HEK293 (cell line): ENCODE measurements at regions of chr17 and their contacts with region 1.

Region 1: GRCh38 chr17:44899069-44899782 is at the start of gene EFTUD2:
- H3K4me3 ChIP-seq: peak within 1 kb of the TSS; percentile 74
- H3K27ac ChIP-seq: peak within 1 kb of the TSS; percentile 93
- H3K4me1 ChIP-seq: peaks cover 24% of the 10 kb centered on the region
- CTCF ChIP-seq: no peak; the same call in 1 of the 2 replicates

Region 2: GRCh38 chr17:44832805-44833204 is 66.4 kb before region 1 on chr17:
- CTCF ChIA-PET with region 1: no interaction called
- POLR2A ChIA-PET with region 1: no interaction called
- H3K4me3 ChIP-seq: no peak overlapping the region
- H3K27ac ChIP-seq: no peak overlapping the region
- H3K4me1 ChIP-seq: peaks cover 14% of the 10 kb centered on the region
- CTCF ChIP-seq: no peak

Region 3: DNA sequence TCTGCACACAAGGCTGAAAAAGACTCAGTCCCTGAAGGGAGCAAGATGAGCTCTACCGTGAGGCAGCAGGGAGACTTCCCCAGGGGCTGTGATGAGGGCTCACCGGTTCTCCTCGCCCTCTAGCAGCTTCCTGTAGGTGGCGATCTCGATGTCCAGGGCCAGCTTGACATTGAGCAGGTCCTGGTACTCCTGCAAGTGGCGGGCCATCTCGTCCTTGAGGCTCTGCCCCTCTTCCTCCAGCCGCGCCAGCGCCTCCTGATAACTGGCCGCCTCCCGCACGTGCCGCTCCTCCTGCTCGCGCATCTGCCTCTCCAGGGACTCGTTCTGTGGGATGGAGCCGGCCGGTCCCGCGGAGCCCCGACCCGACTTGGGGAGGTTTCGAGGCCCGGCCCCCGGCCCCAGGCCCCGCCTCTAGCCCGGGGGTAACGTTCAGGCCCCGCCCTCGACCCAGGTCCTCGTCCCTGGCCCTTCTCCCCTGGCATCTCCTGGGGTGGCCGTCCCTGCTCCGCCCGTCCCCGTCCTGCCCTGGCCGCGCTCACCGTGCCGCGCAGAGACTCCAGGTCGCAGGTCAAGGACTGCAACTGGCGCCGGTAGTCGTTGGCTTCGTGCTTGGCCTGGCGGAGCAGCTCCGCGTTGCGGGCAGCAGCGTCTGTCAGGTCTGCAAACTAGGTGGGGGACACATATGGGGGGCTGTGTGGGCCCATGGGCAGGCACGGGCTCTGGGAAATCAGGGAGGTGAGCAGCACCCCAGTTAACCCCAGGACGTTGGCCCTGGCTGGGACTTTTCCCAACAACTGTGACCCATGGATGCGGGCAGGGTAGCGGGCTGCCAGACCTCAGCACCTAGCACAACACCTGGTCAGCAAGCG is 12.1 kb after region 1 on chr17:
- CTCF ChIA-PET with region 1: interaction called, 47 read pairs
- POLR2A ChIA-PET with region 1: interaction called, 6 read pairs
- H3K4me3 ChIP-seq: no peak overlapping the region
- H3K27ac ChIP-seq: no peak overlapping the region
- H3K4me1 ChIP-seq: no peaks in the 10 kb centered on the region; the same call in 1 of the 2 replicates
- CTCF ChIP-seq: peak; percentile 64

Region 4: DNA sequence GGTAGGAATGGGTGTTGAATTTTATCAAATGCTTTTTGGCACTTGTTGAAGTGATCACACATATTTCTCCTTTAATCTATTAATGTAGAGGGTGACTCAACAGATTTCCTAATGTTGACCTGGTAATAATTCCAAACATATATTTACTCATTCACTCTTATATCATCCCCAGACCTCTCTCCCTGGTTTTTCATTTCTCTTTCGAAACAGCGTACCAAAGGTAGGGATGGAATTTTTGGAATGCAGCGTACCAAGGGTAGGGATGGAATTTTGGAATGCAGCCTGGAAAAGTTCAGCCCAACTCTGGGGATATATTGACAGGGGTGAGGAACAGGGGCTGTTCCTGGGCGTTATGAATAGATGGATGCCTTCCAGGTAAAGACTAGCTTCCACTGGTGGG is 41.1 kb after region 1 on chr17:
- CTCF ChIA-PET with region 1: no interaction called
- POLR2A ChIA-PET with region 1: no interaction called
- H3K4me3 ChIP-seq: no peak overlapping the region
- H3K27ac ChIP-seq: no peak overlapping the region
- H3K4me1 ChIP-seq: peaks cover 4% of the 10 kb centered on the region; the same call in 1 of the 2 replicates
- CTCF ChIP-seq: no peak

Region 5: DNA sequence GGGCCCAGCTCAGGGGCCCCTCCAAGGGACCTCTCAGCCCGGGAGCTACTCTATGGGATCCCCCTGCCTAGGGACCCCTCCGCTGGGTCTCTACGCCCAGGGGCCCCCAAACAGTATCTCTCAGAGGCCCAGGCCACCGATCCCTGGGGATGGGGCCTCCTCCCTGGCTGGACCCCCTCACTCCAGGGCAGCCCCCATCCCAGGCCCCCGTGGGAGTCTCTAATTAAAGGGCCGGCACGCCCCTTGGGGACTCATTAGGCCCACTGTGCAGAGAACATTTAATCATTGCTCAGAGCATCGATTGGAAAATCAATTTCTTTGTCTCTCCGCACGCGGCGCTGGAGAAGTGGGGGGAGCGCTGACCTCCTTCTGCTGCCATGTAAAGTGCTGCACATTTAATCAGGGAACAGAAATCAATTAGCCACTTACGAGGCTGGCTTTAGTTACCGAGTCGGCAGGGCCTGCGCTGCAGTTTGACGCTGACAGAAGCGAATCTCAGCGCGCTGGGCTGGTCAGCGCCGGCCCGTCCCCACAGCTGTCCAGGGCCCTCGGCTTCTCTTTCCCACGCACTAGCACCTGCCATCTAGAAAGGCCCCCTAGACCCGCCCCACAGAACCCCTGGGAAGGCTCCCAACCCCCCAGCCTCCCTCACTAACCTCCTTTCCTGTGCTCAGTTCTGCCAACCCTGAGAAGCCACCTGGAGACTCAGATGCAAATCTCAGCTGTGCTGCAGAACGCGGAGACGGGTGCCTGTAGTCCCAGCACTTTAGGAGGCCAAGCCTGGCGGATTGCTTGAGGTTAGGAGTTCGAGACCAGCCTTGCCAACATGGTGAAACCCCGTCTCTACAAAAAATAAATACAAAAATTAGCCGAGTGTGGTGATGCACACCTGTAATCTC is 89.1 kb after region 1 on chr17:
- CTCF ChIA-PET with region 1: no interaction called
- POLR2A ChIA-PET with region 1: no interaction called
- H3K4me3 ChIP-seq: no peak overlapping the region
- H3K27ac ChIP-seq: no peak overlapping the region
- H3K4me1 ChIP-seq: no peaks in the 10 kb centered on the region
- CTCF ChIP-seq: no peak